Dendritic cell treated with granulocyte-macrophage colony-stimulating factor and Interleukin-4, amounts not matched to agents 40 ng/mL and 50 ng/mL, for 4 days (primary cell): ENCODE measurements at regions of chr3 and their contacts with region 1.

Region 1: GRCh38 chr3:19060404-19060803 is 87.9 kb upstream of the KCNH8 start:
- H3K4me3 Mint-ChIP-seq: no peak overlapping the region
- H3K27ac Mint-ChIP-seq: no peak overlapping the region
- H3K4me1 Mint-ChIP-seq: no peaks in the 10 kb centered on the region
- H3K27me3 Mint-ChIP-seq: no peaks in the 10 kb centered on the region

Region 2: GRCh38 chr3:18987862-18988447 is 72.4 kb before region 1 on chr3:
- intact Hi-C with region 1: no loop called
- H3K4me3 Mint-ChIP-seq: no peak overlapping the region
- H3K27ac Mint-ChIP-seq: no peak overlapping the region
- H3K4me1 Mint-ChIP-seq: no peaks in the 10 kb centered on the region
- H3K27me3 Mint-ChIP-seq: no peaks in the 10 kb centered on the region

Region 3: DNA sequence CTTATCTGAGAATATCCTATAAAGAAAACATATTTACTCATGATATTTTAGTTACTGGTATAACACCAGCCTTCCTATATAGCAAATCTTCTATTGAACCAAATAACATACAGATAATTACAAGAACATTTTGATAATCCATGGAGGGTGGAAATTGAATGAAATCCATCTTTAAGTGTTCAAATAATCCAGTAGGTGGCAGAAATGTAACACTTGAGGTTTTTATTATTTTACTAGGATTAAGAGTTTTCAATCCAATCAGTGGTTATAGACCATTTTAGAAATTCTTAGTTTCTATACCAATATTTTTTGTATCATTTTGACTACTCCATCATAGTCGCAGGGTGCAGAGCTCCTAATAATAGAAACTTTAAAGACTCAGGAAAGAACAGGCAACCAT is 14.0 kb before region 1 on chr3:
- intact Hi-C with region 1: loop called (anchors 2 kb)
- H3K4me3 Mint-ChIP-seq: no peak overlapping the region
- H3K27ac Mint-ChIP-seq: no peak overlapping the region
- H3K4me1 Mint-ChIP-seq: no peaks in the 10 kb centered on the region
- H3K27me3 Mint-ChIP-seq: no peaks in the 10 kb centered on the region

Region 4: DNA sequence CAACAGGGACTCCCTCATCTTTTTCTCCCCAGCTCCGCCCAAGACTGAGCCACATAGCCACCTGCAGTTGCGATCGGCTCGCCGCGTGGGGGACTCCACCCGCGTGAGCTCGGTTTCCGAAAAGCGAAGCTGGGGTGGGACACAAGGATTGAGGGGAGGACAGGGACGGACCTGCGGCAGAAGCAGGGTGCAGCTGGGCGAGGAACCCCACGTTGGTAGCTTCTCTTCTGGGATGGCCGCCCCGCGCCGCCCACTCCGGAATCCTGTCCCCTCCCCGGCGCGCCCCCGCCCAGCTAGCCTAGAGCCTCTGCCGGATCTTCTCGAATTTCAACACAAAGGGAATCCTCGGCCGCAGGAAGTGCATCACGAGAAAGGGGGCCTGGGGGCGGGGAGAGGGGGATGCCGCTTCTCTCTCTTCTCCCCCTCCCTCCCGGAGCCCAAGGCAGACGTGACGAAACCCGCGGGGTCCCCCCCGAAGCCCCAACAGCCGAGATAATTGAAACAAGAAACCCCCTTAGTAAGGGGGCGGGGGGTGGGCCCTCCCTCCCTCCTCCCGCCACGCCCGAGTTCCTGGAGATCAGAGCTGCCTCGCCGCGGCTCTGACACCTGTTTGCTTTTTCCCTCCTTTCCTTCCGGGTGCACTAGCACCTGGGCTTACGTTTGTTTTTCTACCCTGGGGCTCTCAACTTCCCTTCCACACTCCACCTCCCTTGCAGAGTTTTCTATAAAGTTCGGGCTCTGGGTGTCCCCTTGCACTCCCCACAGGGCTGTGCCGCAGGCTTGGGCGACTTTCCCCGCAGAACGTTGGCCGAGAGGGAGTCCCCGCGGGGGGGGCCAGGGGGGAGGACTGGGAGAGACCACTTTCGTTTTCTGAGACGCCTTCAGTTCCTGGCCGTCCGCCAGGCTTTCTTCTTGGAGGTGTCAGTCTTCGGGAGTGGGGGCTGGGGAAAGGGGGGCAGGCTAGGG is 86.6 kb after region 1 on chr3:
- intact Hi-C with region 1: no loop called
- H3K4me3 Mint-ChIP-seq: peak overlapping the region; percentile 85
- H3K27ac Mint-ChIP-seq: no peak overlapping the region
- H3K4me1 Mint-ChIP-seq: peaks cover 29% of the 10 kb centered on the region
- H3K27me3 Mint-ChIP-seq: peaks cover 49% of the 10 kb centered on the region